ENCODE measurements at regions of chr15 and their contacts with region 1.

Region 1: GRCh38 chr15:51749307-51749706 is 2.1 kb upstream of the TMOD2 start:
- DNase-seq: no peak
- ATAC-seq: no peak
- H3K4me3 ChIP-seq: no peak overlapping the region
- H3K27ac ChIP-seq: no peak overlapping the region
- H3K4me1 ChIP-seq: peaks cover 11 to 13% of the 10 kb centered on the region in 2 experiments; a peak in 4 of 5 replicates
- H3K27me3 ChIP-seq: no peaks in the 10 kb centered on the region; a peak in 1 of 5 replicates
- CTCF ChIP-seq: no peak
- EP300 ChIP-seq: no peak
- POLR2A ChIP-seq: no peak
- RAD21 ChIP-seq: no peak

Region 2: GRCh38 chr15:51341366-51342226 is 407.7 kb before region 1 on chr15 and contains the start of gene GLDN:
- CTCF ChIA-PET with region 1: no interaction called
- POLR2A ChIA-PET with region 1: no interaction called
- in situ Hi-C with region 1: no loop called
- intact Hi-C with region 1: no loop called
- DNase-seq: no peak
- ATAC-seq: no peak
- H3K4me3 ChIP-seq: no peak within 1 kb of the TSS
- H3K27ac ChIP-seq: no peak within 1 kb of the TSS
- H3K4me1 ChIP-seq: peaks cover 0 to 5% of the 10 kb centered on the region in 2 experiments; a peak in 1 of 5 replicates
- H3K27me3 ChIP-seq: peaks cover 21 to 34% of the 10 kb centered on the region in 2 experiments; a peak in 4 of 5 replicates
- CTCF ChIP-seq: no peak
- EP300 ChIP-seq: no peak
- POLR2A ChIP-seq: no peak
- RAD21 ChIP-seq: no peak
- polyA plus RNA-seq, gene GLDN: 0.07 to 0.10 TPM

Region 3: DNA sequence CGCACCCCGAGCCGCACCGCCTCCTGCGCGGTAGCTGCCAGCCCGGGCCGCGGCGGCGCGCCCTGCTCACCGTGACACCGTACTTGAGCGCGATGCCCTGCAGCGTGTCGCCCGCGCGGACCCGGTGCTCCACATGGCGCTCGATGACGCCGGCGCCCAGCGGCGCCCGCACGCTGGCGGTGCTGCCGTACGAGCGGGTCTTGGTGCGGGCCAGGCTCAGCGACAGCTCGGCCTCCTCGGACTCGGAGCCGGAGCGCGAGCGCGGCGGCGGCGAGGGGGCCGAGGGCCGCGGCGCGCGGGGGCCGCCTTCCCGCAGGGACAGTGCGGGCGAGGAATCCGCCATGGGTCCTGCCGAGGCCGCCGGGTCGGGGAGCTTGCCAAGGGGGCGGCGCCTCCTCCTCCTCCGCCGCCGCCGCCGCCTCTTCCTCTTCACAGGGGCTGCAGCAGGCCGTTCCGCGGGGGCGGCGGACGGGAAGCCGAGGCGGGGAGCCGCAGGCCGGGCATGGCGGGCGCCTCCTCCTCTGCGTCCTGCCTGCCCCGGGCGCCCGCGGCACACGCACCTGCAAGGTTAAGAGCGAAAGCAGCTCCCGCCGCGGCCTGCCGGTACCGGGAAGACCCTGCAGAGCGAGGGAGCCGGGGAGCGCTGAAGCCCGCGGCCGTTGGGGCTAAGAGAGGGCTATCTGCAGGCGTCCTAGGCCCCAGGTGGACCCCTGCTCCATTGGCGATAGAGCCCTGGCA is 11.9 kb before region 1 on chr15 and contains the start of gene LYSMD2:
- CTCF ChIA-PET with region 1: no interaction called
- POLR2A ChIA-PET with region 1: interaction called, 15 read pairs
- in situ Hi-C with region 1: no loop called
- intact Hi-C with region 1: no loop called
- DNase-seq: peak; percentile 73 to 81 (median 76)
- ATAC-seq: peak; percentile 76
- H3K4me3 ChIP-seq: peak within 1 kb of the TSS; percentile 64
- H3K27ac ChIP-seq: peak within 1 kb of the TSS; percentile 63
- H3K4me1 ChIP-seq: peaks cover 21 to 41% of the 10 kb centered on the region in 2 experiments
- H3K27me3 ChIP-seq: no peaks in the 10 kb centered on the region
- CTCF ChIP-seq: no peak
- EP300 ChIP-seq: no peak
- POLR2A ChIP-seq: no peak
- RAD21 ChIP-seq: no peak
- polyA plus RNA-seq, gene LYSMD2: 4.3 to 4.8 TPM

Region 4: GRCh38 chr15:51982013-51982769 is 232.9 kb after region 1 on chr15:
- CTCF ChIA-PET with region 1: no interaction called
- POLR2A ChIA-PET with region 1: no interaction called
- in situ Hi-C with region 1: no loop called
- intact Hi-C with region 1: no loop called
- DNase-seq: peak in 2 of 4 experiments; percentile 57 to 67
- ATAC-seq: peak; percentile 93
- H3K4me3 ChIP-seq: no peak overlapping the region
- H3K27ac ChIP-seq: peak overlapping the region; percentile 65
- H3K4me1 ChIP-seq: peaks cover 8 to 12% of the 10 kb centered on the region in 2 experiments
- H3K27me3 ChIP-seq: no peaks in the 10 kb centered on the region
- CTCF ChIP-seq: peak; percentile 52 to 85 (median 66); a peak in 5 of 6 replicates
- EP300 ChIP-seq: peak; percentile 64
- POLR2A ChIP-seq: no peak; the same call in 1 of the 2 replicates
- RAD21 ChIP-seq: peak; percentile 87 to 94